IMR-90 (cell line): ENCODE measurements at regions of chr2 and their contacts with region 1.

Region 1: DNA sequence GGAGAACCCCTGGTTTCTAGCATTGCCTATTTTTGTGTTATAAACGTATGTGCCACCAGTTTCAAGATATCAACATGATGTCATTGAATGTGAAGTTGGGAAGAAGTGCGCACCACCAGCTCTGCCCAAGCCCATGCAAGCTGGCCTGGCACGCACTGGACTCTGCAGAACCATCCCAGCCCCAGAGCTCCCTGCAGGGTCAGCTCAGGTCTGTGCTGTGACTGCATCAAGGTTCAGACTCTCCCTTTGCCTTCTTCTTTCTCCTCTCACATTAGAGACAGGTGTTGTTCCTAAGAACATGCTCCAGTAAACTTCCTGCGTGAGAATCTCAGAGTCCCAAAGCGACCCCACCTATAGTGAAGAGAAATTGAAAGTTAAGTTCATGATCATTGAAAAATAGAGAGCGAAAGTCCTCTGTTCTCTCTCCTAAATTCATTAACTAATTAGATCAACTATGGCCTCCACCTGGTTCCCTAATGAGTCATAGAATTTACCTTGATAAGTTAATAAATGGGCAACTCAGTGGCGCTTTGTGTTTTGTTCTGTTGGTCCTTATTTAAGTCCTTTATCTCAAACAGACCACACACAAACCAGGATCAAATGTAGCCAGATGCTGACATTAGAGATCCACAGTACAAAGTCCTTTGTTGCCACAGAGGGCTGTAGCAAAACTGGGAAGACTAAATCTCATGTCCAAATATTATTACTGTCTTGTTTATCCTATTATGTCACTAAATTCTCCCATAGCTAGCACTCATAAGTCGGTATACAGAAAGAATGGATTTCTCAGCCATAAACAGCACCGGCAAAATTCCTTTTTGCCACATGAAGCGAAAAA is 432.3 kb downstream of the STK39 start:
- DNase-seq: no peak
- ATAC-seq: no peak
- H3K4me3 ChIP-seq: no peak overlapping the region
- H3K27ac ChIP-seq: no peak overlapping the region
- H3K4me1 ChIP-seq: no peaks in the 10 kb centered on the region
- H3K27me3 ChIP-seq: no peaks in the 10 kb centered on the region; the same call in 1 of the 2 replicates
- CTCF ChIP-seq: no peak
- POLR2A ChIP-seq: no peak
- RAD21 ChIP-seq: no peak

Region 2: DNA sequence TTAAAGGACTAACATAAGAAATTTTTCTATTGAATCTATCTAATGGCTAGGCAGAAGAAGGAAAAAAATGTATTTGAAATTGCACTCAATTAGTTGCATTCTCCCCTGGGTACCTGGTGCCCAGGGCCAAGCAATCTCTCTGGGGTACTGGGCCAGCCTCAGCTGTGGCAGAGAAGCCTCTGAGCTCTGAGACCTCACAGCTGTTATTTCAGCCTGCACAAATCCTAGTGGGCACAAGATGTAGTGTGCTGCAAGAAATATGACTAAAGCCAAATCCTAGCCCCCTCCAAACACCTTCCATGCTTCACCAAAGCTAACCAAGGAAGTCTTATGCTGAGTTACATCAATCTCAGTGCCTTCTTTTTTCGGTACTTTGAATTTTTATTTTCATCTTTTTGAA is 46.1 kb before region 1 on chr2:
- CTCF ChIA-PET with region 1: no interaction called
- POLR2A ChIA-PET with region 1: no interaction called
- dilution Hi-C with region 1: no loop called
- in situ Hi-C with region 1: no loop called
- intact Hi-C with region 1: no loop called
- DNase-seq: no peak
- ATAC-seq: no peak
- H3K4me3 ChIP-seq: no peak overlapping the region
- H3K27ac ChIP-seq: no peak overlapping the region
- H3K4me1 ChIP-seq: no peaks in the 10 kb centered on the region
- H3K27me3 ChIP-seq: no peaks in the 10 kb centered on the region
- CTCF ChIP-seq: no peak
- POLR2A ChIP-seq: no peak
- RAD21 ChIP-seq: no peak

Region 3: DNA sequence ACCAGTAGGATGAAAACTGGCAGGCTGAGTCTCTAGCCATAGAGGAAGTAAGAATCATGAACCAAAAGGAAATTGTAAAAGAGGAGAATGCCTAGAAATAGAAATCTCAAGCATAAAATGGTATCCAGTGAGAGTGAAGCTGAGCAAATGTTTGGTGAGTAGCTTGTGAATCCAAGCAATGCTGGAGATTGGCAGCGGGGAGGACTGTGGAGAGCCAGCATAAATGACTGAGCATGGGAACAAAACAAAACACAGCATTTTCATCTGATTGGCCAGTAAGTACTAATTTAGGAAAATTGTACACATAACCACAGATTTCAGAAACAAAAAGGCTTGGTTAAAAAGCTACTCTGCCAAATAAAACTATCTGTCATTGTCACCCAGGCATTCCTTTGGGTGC is 42.3 kb after region 1 on chr2:
- CTCF ChIA-PET with region 1: no interaction called
- POLR2A ChIA-PET with region 1: no interaction called
- dilution Hi-C with region 1: no loop called
- in situ Hi-C with region 1: no loop called
- intact Hi-C with region 1: loop called (anchors 1 kb)
- DNase-seq: no peak
- ATAC-seq: no peak
- H3K4me3 ChIP-seq: no peak overlapping the region
- H3K27ac ChIP-seq: no peak overlapping the region
- H3K4me1 ChIP-seq: no peaks in the 10 kb centered on the region
- H3K27me3 ChIP-seq: no peaks in the 10 kb centered on the region
- CTCF ChIP-seq: no peak
- POLR2A ChIP-seq: no peak
- RAD21 ChIP-seq: no peak

Region 4: DNA sequence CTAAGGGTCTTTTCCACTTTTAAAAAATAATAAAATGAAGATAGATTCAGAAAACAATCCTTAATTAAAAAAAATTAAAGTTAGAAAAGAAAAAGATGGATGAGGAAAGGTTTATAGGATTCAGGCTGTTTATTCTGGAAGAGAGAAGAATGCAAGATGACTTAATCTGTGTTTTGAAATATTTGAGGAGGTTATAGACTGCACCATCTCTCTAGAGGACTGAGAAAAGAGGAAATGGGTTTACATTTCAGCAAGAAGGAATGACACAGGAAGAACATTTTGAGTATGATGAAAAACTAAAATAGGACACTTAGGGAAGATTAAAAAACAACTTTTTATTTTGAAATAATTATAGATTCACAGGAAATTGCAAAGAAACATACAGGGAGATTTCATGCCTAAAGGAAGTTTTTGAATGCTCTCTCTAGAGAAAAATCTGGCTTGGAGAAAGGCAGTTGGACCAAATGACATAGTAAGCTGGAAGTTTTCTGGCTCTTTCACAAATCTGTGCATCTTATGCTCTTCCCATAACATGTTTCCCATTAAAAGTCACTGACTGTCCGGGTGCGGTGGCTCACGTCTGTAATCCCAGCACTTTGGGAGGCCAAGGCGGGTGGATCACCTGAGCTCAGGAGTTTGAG is 716.0 kb after region 1 on chr2:
- CTCF ChIA-PET with region 1: no interaction called
- POLR2A ChIA-PET with region 1: no interaction called
- dilution Hi-C with region 1: no loop called
- in situ Hi-C with region 1: no loop called
- intact Hi-C with region 1: no loop called
- DNase-seq: peak; percentile 50
- ATAC-seq: peak; percentile 83
- H3K4me3 ChIP-seq: no peak overlapping the region
- H3K27ac ChIP-seq: peak overlapping the region; percentile 17; the same call in 1 of the 2 replicates
- H3K4me1 ChIP-seq: peaks cover 13% of the 10 kb centered on the region; the same call in 1 of the 2 replicates
- H3K27me3 ChIP-seq: no peaks in the 10 kb centered on the region
- CTCF ChIP-seq: no peak
- POLR2A ChIP-seq: no peak
- RAD21 ChIP-seq: no peak